Dendritic cell treated with granulocyte-macrophage colony-stimulating factor and Interleukin-4, amounts not matched to agents 40 ng/mL and 50 ng/mL, for 4 days (primary cell): ENCODE measurements at regions of chr13 and their contacts with region 1.

Region 1: DNA sequence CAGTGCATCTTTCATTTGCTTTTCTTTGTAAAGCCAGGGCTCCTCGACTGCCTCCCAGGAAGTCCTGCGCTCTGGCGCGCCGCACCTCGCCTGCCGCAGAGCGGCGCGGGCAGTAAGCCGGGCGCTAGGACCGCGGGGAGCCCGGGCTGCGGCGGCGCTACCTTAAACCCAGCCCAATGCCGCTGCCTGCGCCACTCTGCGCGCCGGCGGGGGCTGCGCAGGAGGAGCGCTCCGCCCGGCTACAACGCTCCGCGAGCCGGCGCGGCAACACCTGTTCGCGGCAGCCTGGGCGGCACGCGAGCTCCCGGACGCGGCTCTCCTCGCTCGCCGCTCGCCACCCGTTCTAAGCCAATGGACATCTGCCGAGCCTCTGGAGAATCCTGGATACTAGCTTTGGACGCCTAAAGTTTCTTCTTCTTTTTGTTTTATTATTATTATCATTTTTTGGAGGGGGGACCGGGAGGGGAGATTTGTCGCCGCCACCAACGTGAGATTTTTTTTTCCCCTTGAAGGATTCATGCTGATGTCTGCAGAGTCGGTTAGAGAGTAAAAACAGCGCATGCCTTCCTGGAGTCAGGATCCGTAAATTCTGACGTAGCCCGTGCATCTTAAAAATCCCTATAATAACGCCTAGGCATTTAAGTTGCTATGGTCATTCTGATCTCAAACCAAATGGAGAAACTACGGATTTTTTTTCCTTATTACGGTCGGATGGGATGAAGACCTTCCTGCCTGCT is at the start of gene FGF9:
- H3K4me3 Mint-ChIP-seq: peak within 1 kb of the TSS; percentile 83
- H3K27ac Mint-ChIP-seq: no peak within 1 kb of the TSS
- H3K4me1 Mint-ChIP-seq: peaks cover 54% of the 10 kb centered on the region
- H3K27me3 Mint-ChIP-seq: peaks cover 87% of the 10 kb centered on the region

Region 2: GRCh38 chr13:20843166-20843565 is 827.9 kb before region 1 on chr13:
- intact Hi-C with region 1: no loop called
- H3K4me3 Mint-ChIP-seq: no peak overlapping the region
- H3K27ac Mint-ChIP-seq: no peak overlapping the region
- H3K4me1 Mint-ChIP-seq: no peaks in the 10 kb centered on the region
- H3K27me3 Mint-ChIP-seq: no peaks in the 10 kb centered on the region

Region 3: DNA sequence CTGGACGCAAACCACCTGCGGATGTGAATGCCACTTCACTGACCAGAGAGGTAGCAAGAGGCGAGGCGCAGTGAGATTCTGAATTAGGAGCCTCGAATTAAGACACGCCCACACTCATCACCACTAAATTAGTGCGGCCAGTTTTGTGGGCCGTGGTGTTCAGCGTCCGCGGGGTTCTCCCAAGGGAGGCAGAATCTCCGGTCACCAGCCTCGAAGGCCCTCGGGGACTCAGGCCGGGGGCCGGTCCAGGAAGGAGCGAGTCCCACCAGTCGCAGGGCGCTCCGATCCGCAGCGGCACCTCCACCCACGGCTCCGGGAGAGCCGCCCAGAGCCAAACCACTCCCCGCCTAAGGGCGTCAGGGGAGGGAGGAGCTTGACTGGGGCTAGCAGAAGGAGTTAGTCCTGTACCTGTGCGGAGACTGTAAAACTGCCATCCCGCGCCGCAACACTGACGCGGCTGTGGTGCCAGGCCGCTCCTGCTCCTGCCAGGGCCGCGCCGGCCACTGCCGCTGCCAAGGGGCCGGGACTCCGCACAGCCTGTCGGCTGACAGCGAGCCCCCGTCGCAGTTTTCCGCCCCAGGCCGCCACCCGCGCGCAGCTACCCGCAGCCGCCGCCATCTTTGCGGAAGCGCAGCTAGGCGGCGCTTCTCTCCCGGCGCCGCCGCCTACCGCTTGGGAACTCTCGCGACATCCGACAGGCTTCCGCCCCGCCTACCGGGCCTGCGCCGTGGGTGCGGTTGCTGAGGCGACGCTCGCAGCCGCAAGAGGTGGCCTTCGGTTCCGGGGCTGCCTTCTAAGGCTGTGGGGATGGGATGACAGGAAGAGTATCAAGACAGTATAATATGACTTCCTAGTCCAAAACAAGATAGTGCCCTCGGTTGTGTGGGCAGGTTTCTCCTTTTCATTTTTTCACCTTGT is 67.3 kb before region 1 on chr13 and contains the start of gene MICU2:
- intact Hi-C with region 1: loop called (anchors 2 kb)
- H3K4me3 Mint-ChIP-seq: peak within 1 kb of the TSS; percentile 83
- H3K27ac Mint-ChIP-seq: peak within 1 kb of the TSS; percentile 95
- H3K4me1 Mint-ChIP-seq: peaks cover 13% of the 10 kb centered on the region
- H3K27me3 Mint-ChIP-seq: peaks cover 16% of the 10 kb centered on the region

Region 4: GRCh38 chr13:21971662-21972621 is 300.9 kb after region 1 on chr13:
- intact Hi-C with region 1: no loop called
- H3K4me3 Mint-ChIP-seq: no peak overlapping the region
- H3K27ac Mint-ChIP-seq: no peak overlapping the region
- H3K4me1 Mint-ChIP-seq: no peaks in the 10 kb centered on the region
- H3K27me3 Mint-ChIP-seq: no peaks in the 10 kb centered on the region

Region 5: DNA sequence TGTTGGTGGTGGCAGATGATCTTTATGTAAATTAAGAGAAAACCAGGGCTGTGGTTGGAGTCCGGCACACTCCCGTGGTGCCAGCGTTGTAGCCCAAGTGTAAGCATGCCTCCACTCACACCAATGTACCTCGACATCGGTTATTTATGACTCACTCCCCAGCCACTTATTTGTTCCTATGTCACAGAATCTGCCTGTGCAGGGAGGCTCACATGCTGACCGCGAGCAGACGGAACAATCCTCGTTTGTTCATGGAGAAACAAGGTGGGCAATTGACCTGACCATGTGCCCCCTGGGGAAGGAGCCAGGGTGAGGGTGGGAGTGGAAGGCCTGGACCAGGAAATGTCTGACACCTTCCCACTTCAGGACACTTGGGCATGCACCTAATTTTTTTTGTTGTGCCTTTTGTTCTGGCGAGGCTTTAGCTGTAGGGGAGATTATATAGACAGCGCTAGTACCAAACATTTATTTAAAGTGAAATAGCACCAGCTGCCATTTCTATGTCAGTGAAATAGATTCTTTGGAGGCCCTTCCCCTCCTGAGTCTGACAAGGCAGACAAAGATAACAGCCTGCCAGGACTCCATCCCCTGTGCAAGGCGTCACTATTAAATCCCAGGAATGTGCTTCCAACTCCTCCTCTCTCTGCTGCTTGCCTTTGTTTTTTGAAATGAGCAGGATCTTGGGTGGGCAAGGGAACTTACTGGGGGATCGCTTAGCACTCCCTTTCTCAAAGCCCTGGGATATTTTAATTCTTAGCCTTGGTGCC is 394.0 kb after region 1 on chr13:
- intact Hi-C with region 1: no loop called
- H3K4me3 Mint-ChIP-seq: no peak overlapping the region
- H3K27ac Mint-ChIP-seq: no peak overlapping the region
- H3K4me1 Mint-ChIP-seq: peaks cover 4% of the 10 kb centered on the region
- H3K27me3 Mint-ChIP-seq: peaks cover 2% of the 10 kb centered on the region